Activated naive CD4-positive, alpha-beta T cell treated with anti-CD3 and anti-CD28 coated beads, Interleukin-2, amount 10 ng/mL, durations not matched to agents 7 days and 5 days (primary cell): ENCODE measurements at regions of chr9 and their contacts with region 1.

Region 1: GRCh38 chr9:126942399-126942798 is 27.8 kb downstream of the RALGPS1 start:
- DNase-seq: no peak
- H3K4me3 Mint-ChIP-seq: no peak overlapping the region
- H3K27ac Mint-ChIP-seq: no peak overlapping the region
- H3K4me1 Mint-ChIP-seq: peaks cover 6% of the 10 kb centered on the region
- H3K27me3 Mint-ChIP-seq: peaks cover 56% of the 10 kb centered on the region

Region 2: DNA sequence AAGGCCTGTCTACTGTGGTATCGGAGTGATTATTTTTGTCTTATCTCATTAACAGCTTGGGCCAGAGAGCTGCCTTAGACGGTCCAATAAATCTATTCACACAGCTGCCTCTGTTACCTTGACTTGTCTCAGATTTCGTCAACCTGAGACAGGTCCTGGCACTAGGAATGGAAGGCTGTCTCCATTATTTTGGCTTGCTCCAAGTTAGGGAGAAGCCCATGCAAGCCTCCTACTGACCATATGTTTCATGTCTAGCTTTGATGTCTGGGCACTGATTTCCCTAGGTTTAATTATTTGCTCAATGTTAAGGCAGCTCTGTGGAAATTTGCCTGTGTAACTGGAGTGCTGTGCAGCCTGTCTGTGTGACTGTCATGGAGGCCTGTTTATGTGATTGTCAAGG is 40.2 kb before region 1 on chr9:
- CTCF ChIA-PET with region 1: no interaction called
- DNase-seq: no peak
- H3K4me3 Mint-ChIP-seq: no peak overlapping the region
- H3K27ac Mint-ChIP-seq: no peak overlapping the region
- H3K4me1 Mint-ChIP-seq: no peaks in the 10 kb centered on the region
- H3K27me3 Mint-ChIP-seq: peaks cover 8% of the 10 kb centered on the region

Region 3: DNA sequence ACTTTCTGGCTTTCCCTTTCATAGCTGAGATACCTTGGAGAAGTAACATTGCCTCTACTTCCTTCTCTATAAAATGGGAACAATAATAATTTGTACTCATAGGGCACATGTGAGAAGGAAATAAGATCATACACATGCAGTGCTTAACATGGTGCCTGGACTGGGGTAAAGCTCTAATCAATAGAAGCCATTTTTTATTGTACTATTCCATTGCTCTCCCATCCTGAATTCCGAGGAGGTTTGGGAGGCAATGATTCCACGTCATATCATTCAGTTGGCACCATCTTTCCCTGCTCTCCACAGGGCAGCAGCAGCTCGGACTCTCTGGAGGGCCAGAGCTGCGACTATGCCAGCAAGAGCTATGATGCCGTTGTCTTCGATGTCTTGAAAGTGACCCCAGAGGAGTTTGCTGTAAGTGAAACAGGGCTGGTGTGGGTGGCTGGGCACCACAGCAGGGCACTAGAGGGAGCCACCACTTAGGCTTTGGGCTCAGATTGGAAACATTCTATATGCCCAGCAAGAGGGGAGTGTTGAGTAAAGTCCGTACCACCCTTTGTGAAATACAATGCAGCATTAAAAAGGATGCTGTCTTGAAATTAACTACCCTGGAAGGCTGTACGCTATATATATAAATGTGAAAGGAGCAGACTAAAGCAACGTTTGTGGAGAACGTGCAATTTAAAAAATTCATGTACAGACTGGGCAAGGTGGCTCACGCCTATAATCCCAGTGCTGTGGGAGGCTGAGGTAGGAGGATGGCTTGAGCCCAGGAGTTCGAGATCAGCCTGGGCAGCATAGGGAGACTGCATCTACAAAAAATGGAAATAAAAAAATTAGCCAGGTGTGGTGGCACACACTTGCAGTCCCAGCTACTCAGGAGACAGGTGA is 23.4 kb after region 1 on chr9:
- CTCF ChIA-PET with region 1: interaction called, 19 read pairs
- DNase-seq: peak; percentile 65
- H3K4me3 Mint-ChIP-seq: no peak overlapping the region
- H3K27ac Mint-ChIP-seq: no peak overlapping the region
- H3K4me1 Mint-ChIP-seq: peaks cover 3% of the 10 kb centered on the region
- H3K27me3 Mint-ChIP-seq: peaks cover 28% of the 10 kb centered on the region